ENCODE measurements at regions of chr21 and their contacts with region 1.

Region 1: GRCh38 chr21:42258153-42258884 is 39.4 kb downstream of the ABCG1 start:
- DNase-seq: peak; percentile 75 to 85 (median 78)
- H3K4me3 ChIP-seq: no peak overlapping the region
- H3K27ac ChIP-seq: no peak overlapping the region
- H3K4me1 ChIP-seq: peaks cover 9 to 68% (median 55%) of the 10 kb centered on the region in 4 experiments
- H3K27me3 ChIP-seq: no peaks in the 10 kb centered on the region

Region 2: DNA sequence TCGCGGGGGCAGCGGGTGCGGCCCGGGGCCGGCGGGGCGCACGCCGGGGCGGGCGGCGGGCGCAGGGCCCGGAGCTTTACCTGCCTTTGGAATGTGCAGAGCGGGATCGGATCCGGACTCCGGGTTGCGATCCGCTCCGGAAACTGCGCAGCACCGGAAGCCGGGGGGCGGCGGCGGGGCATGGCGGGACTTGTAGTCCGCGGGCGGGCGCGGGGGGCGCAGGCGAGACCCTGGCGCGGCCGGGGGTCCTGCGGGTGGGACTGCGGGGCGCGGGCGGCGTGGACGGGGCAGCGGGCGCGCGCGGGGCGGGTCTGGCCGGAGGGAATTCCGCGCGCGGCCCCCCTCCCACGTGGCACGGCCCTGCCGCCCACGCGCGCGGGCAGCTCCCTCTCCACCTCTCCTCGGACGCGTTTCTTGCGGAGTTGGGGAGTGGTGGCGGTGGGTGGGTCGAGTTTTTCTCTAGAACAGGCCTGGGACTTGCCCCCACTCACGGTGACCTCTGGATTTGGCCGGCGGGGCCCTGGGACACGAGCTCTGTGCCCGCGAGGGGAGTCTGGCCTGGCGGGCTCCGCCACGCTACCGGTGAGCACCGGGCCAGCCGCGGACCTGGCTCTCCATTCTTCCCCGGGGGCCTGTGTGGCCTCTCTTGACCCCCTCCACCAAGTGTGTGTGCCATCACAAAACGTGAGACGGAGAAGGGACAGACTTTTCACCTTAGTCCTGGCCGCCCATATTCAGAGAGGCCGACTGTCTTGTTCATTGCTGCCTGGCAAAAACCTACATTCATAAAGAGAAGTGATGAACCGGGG is 378.9 kb before region 1 on chr21 and contains the start of gene PRDM15:
- CTCF ChIA-PET with region 1: no interaction called
- POLR2A ChIA-PET with region 1: no interaction called
- DNase-seq: peak; percentile 78 to 91 (median 88)
- H3K4me3 ChIP-seq: peak within 1 kb of the TSS; percentile 56 to 86 (median 82)
- H3K27ac ChIP-seq: peak within 1 kb of the TSS; percentile 82 to 92
- H3K4me1 ChIP-seq: peaks cover 15 to 40% (median 21%) of the 10 kb centered on the region in 4 experiments
- H3K27me3 ChIP-seq: no peaks in the 10 kb centered on the region

Region 3: GRCh38 chr21:42145569-42146272 is 112.6 kb before region 1 on chr21:
- CTCF ChIA-PET with region 1: interaction called, 53 read pairs
- POLR2A ChIA-PET with region 1: no interaction called
- DNase-seq: peak; percentile 68 to 86 (median 82)
- H3K4me3 ChIP-seq: no peak overlapping the region
- H3K27ac ChIP-seq: no peak overlapping the region
- H3K4me1 ChIP-seq: peaks cover 0 to 15% (median 9%) of the 10 kb centered on the region in 4 experiments
- H3K27me3 ChIP-seq: no peaks in the 10 kb centered on the region

Region 4: DNA sequence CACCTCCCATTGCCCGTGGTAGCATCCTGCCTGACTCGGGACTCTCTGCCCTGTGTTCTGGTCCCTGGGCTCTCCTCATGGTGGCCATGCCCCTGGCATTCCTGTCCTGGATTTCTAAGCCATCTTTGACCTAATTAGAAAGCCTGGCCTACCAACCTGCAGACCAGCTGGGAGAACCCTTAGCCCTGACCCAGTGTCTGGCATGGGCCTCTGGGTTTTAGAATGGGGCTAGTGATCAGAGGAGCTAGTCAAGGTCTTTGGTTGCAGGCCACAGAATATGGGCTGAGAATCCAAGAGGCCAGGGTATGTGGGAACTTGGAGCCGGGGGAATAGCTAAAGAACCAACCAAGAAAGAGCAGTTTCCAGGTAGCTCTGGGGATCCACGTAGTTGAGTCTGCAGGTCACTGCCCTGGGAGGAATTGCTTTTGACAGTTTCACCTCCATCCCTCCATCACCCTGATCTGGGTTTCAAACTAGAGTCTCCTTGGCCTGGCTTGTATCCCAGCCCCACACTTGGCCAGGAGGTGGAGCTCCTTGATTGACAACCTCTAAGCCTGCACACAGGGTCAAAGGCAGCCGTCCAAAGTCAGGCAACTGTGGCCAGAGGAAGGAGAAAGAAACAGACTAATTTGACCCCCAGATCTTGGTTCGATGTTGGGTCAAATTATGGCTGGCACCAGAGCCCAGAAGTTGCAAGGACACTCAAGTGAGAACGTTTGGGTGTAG is 94.1 kb before region 1 on chr21:
- CTCF ChIA-PET with region 1: interaction called, 79 read pairs
- POLR2A ChIA-PET with region 1: interaction called, 6 read pairs
- DNase-seq: peak; percentile 49 to 64 (median 54)
- H3K4me3 ChIP-seq: no peak overlapping the region
- H3K27ac ChIP-seq: no peak overlapping the region
- H3K4me1 ChIP-seq: peaks cover 0 to 30% (median 26%) of the 10 kb centered on the region in 4 experiments
- H3K27me3 ChIP-seq: no peaks in the 10 kb centered on the region

Region 5: GRCh38 chr21:42220138-42220701 is 38.1 kb before region 1 on chr21:
- CTCF ChIA-PET with region 1: interaction called, 20 read pairs
- POLR2A ChIA-PET with region 1: interaction called, 4 read pairs
- DNase-seq: peak; percentile 93 to 98 (median 98)
- H3K4me3 ChIP-seq: peak overlapping the region; percentile 57 to 91 (median 80)
- H3K27ac ChIP-seq: peak overlapping the region; percentile 54 to 66
- H3K4me1 ChIP-seq: peaks cover 8 to 37% (median 28%) of the 10 kb centered on the region in 4 experiments
- H3K27me3 ChIP-seq: no peaks in the 10 kb centered on the region

Region 6: DNA sequence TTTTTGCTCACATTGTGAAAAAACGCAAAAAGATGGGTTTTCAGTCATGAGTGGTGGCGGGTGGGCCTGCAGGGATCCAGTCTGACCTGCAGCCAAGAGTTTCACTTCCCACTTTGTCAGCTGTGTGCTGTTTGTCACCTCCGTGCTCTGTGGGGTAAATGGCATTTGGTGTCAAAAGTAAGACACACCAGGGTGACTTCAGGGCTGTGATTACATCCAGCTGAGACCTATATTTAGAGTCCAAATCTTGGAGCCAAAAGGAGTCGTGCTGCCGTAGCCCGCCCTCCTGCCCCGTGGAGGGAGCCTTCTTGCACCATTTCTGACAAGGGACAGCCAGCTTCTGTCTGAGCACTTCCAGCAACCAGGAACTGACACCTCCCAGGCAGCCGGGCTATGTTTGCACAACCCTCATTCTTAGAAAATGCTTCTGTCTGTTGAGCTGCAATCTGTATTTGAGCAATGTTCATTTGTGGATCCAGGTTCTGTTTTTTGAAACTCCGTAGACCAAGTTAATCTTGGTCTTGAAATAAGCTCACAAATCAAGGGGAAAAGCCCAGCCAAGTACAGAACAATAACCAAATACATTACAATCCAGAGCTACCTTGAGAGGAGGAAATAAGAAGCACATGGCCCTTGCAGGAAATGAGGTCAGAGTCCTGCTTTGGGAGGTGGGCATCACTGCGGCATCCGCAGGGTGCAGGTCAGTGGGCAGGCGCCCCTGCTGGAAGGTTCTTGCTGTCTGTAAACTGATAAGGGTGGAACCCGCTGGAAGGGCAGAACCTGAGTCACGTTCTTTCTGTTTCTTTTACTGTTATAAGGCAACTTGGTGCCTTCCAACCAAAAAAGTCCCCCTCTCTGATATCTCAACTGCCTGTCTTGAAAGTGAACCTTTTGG is 25.0 kb before region 1 on chr21:
- CTCF ChIA-PET with region 1: interaction called, 116 read pairs
- POLR2A ChIA-PET with region 1: interaction called, 8 read pairs
- DNase-seq: peak; percentile 91 to 96 (median 95)
- H3K4me3 ChIP-seq: peak overlapping the region in 2 of 7 experiments; percentile 21 to 71
- H3K27ac ChIP-seq: peak overlapping the region in 1 of 2 experiments; percentile 20
- H3K4me1 ChIP-seq: peaks cover 38 to 96% (median 92%) of the 10 kb centered on the region in 4 experiments
- H3K27me3 ChIP-seq: no peaks in the 10 kb centered on the region

Region 7: GRCh38 chr21:42276526-42277154 is 18.3 kb after region 1 on chr21:
- CTCF ChIA-PET with region 1: interaction called, 75 read pairs
- POLR2A ChIA-PET with region 1: no interaction called
- DNase-seq: peak in 1 of 3 donors; percentile 32
- H3K4me3 ChIP-seq: no peak overlapping the region
- H3K27ac ChIP-seq: no peak overlapping the region
- H3K4me1 ChIP-seq: peaks cover 0 to 8% (median 0%) of the 10 kb centered on the region in 4 experiments
- H3K27me3 ChIP-seq: no peaks in the 10 kb centered on the region

Region 8: DNA sequence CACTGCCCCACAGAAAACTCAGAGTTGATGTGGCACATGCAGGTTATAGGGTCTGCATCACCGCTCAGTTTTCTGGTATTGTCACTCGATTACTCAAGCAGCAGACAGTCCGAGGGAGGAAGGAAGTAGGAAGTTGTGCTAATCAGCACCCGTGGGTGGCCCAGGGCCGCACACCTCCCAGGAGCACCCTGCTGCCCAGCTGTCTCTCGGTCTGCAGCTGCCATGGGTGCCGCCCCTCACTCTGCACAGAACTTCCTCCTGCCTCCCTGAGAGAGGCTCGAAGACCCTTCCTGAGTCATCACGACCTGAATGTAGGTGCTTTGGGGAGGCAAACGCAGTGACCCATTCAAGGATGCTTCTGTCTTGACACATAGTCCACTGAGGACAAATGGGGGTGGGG is 61.1 kb after region 1 on chr21:
- CTCF ChIA-PET with region 1: no interaction called
- POLR2A ChIA-PET with region 1: no interaction called
- DNase-seq: peak; percentile 61 to 88 (median 75)
- H3K4me3 ChIP-seq: no peak overlapping the region
- H3K27ac ChIP-seq: no peak overlapping the region
- H3K4me1 ChIP-seq: peaks cover 3 to 24% (median 13%) of the 10 kb centered on the region in 4 experiments
- H3K27me3 ChIP-seq: no peaks in the 10 kb centered on the region